ENCODE measurements at regions of chr11 and their contacts with region 1.

Region 1: DNA sequence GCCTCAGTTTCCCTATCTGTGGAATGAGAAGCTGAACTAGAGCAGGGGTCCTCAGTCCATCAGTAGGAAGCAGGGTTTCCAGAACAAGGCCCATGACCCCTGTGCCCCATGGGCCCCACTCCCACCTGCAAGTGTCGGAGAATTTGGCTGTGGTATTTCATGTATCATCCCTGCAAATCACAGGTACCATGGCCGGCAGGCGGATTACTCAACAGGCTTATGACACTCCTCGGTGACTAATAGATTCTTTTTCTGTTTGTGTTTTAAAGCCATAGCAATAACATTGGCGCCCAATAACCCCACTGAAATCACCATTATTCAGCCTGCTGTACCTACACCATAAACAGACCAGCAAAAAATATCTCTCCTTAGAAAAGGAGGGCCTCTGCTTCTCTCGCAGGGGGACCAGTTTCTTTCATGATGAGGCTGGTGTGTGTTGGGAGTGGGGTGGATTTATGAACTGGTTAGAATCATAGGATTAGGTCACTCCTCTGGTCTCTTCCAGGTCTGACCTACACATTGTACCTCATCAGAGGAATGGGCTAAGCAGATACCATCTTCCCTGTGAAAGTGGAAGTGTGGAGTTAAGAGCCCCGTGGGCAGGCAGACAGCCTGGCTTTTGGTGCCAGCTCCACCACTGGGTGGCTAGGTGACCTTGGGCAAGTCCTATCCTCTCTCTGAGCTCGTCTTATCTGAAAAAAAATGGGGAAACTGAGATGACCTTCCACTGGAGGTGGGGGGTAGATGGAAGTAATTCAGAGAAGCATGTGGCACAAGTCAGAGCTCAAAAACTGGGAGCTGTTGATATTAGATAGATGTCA is 60.2 kb upstream of the WNT11 start:
- DNase-seq: no peak
- H3K4me3 ChIP-seq: no peak overlapping the region
- H3K27ac ChIP-seq: no peak overlapping the region
- H3K4me1 ChIP-seq: no peaks in the 10 kb centered on the region
- CTCF ChIP-seq: no peak

Region 2: GRCh38 chr11:76215941-76216340 is 50.5 kb before region 1 on chr11:
- CTCF ChIA-PET with region 1: no interaction called
- POLR2A ChIA-PET with region 1: no interaction called
- intact Hi-C with region 1: no loop called
- DNase-seq: no peak
- H3K4me3 ChIP-seq: no peak overlapping the region
- H3K27ac ChIP-seq: no peak overlapping the region
- H3K4me1 ChIP-seq: no peaks in the 10 kb centered on the region
- CTCF ChIP-seq: no peak

Region 3: GRCh38 chr11:76361374-76361773 is 94.9 kb after region 1 on chr11:
- CTCF ChIA-PET with region 1: no interaction called
- POLR2A ChIA-PET with region 1: interaction called, 10 read pairs
- intact Hi-C with region 1: no loop called
- DNase-seq: no peak
- H3K4me3 ChIP-seq: no peak overlapping the region
- H3K27ac ChIP-seq: no peak overlapping the region
- H3K4me1 ChIP-seq: peaks cover 8% of the 10 kb centered on the region
- CTCF ChIP-seq: no peak

Measured in OCI-LY7 (cell line).